ENCODE measurements at regions of chr1 and their contacts with region 1.

Region 1: DNA sequence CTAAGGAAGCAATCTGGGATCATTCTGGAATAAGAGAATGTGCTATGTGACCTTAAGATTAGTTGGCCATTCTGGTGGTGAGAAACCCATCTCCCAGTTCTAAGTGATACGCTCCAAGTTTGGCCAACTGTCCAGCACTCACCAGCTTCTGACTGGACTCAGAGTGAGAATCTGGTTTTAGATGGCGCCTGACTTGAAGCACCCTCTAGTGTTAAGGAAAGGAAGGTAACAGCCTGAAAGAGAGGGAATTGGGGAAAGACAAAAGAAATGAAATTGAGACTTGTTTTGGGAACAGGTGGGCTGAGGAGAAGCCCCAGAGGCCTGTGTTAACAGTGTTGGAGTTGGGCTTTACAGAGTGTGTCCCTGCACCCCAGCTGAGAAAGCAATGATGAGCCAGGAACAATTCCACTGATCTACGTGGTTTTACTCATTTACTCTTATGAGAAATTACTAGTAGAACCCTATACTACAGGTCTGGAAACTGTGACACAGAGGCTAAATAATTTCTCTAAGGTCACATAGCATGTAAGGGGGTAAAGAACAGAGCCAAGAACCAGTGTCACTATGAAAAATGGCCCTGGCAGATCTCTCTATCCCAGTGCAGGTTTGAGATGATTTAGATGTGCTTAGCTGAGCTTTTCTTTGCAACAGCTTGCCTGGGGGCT is 9.3 kb upstream of the FCAMR start:
- DNase-seq: no peak

Region 2: DNA sequence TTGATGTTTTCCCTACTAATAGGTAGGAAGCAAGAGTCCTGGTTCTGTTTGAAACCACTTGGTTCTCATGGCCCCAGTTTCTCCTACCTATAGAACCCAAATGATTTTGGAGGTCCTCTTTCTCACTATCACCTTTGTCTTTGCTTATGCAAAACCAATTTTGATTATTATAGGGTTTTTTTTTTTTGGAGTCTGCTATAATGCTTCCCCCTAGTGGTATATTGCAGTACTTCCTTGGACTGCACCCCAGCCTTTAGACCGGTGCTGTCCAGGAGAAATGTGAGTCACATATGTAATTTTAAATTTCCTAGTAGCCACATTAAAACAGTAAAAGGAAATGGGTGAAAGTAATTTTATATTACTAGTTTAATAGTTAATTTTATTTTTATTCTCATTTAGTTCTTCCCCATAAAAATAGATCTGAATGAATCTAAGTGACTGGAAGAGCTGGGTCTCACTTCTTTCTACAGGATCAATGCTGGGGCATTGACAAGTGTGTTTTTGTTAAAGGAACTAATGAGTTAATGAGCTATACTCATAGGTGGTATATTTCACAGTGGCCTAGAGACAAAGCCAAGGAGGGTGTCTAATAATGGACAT is 68.3 kb before region 1 on chr1:
- intact Hi-C with region 1: no loop called
- DNase-seq: peak; percentile 16

Region 3: GRCh38 chr1:206935491-206936067 is 43.9 kb before region 1 on chr1:
- intact Hi-C with region 1: loop called in 1 of 2 experiments (anchors 1 kb)
- DNase-seq: peak; percentile 82